Activated CD4-positive, alpha-beta memory T cell treated with anti-CD3 and anti-CD28 coated beads, Interleukin-2, amount 10 ng/mL, durations not matched to agents 7 days and 5 days (primary cell): ENCODE measurements at regions of chr20 and their contacts with region 1.

Region 1: GRCh38 chr20:35092524-35093266 is at the start of gene TRPC4AP:
- DNase-seq: peak; percentile 91
- H3K4me3 Mint-ChIP-seq: peak within 1 kb of the TSS; percentile 85
- H3K27ac Mint-ChIP-seq: peak within 1 kb of the TSS; percentile 85
- H3K4me1 Mint-ChIP-seq: peaks cover 55% of the 10 kb centered on the region
- H3K27me3 Mint-ChIP-seq: no peaks in the 10 kb centered on the region
- total RNA-seq, gene TRPC4AP: 63.5 to 65.7 TPM

Region 2: DNA sequence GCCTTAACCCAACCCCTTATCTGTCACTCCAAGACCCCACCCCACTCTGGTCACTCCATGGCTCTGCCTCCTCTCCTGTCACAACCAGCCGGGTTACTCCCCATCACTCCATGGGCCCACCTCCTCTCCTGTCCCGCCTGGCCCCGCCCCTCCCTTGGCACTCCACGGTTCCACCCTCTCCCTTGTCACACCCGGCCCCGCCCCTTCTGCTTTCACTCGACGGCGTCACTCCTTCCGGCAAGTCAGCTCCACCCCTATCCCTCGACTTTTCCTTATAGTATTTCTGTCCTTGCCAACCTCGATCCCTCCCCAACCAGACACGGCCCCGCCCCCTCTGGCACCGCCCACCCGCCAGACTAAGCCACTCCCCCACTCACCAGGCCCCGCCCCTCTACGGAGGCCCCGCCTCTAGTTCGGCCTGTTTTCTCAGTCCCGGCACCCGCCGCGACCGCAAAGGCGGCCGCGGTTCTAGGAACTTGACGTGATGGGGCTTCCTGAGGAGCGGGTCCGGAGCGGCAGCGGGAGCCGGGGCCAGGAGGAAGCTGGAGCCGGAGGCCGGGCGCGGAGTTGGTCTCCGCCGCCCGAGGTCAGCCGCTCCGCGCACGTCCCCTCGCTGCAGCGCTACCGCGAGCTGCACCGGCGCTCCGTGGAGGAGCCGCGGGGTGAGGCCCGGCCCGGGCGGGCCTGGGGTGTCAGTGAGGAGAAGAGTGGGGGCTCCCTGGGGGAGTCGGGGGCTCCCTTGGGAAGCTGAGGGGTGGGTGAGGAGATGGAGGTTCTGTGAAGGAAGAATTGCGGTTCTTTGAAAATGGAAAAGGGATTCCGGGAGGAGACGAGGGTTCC is 216.3 kb before region 1 on chr20 and contains the start of gene ACSS2:
- CTCF ChIA-PET with region 1: interaction called, 15 read pairs
- POLR2A ChIA-PET with region 1: interaction called, 13 read pairs
- DNase-seq: peak; percentile 99
- H3K4me3 Mint-ChIP-seq: peak within 1 kb of the TSS; percentile 93
- H3K27ac Mint-ChIP-seq: peak within 1 kb of the TSS; percentile 77
- H3K4me1 Mint-ChIP-seq: peaks cover 69% of the 10 kb centered on the region
- H3K27me3 Mint-ChIP-seq: peaks cover 2% of the 10 kb centered on the region
- total RNA-seq, gene ACSS2: 43.5 to 47.5 TPM

Region 3: GRCh38 chr20:34907616-34908469 is 184.9 kb before region 1 on chr20:
- CTCF ChIA-PET with region 1: no interaction called
- POLR2A ChIA-PET with region 1: no interaction called
- DNase-seq: no peak
- H3K4me3 Mint-ChIP-seq: no peak overlapping the region
- H3K27ac Mint-ChIP-seq: no peak overlapping the region
- H3K4me1 Mint-ChIP-seq: peaks cover 12% of the 10 kb centered on the region
- H3K27me3 Mint-ChIP-seq: no peaks in the 10 kb centered on the region

Region 4: DNA sequence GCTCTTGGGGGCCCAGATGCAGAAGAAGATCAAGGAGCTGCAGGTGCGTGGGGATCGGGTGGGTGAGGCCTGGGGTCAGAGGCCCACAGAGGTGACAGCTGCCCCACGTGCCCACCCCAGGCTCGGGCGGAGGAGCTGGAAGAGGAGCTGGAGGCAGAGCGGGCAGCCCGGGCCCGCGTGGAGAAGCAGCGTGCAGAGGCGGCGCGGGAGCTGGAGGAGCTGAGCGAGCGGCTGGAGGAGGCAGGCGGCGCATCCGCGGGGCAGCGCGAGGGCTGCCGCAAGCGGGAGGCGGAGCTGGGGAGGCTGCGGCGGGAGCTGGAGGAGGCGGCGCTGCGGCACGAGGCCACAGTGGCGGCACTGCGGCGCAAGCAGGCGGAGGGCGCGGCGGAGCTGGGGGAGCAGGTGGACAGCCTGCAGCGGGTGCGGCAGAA is 95.5 kb before region 1 on chr20:
- CTCF ChIA-PET with region 1: no interaction called
- POLR2A ChIA-PET with region 1: no interaction called
- DNase-seq: peak; percentile 27
- H3K4me3 Mint-ChIP-seq: no peak overlapping the region
- H3K27ac Mint-ChIP-seq: no peak overlapping the region
- H3K4me1 Mint-ChIP-seq: peaks cover 5% of the 10 kb centered on the region
- H3K27me3 Mint-ChIP-seq: no peaks in the 10 kb centered on the region

Region 5: DNA sequence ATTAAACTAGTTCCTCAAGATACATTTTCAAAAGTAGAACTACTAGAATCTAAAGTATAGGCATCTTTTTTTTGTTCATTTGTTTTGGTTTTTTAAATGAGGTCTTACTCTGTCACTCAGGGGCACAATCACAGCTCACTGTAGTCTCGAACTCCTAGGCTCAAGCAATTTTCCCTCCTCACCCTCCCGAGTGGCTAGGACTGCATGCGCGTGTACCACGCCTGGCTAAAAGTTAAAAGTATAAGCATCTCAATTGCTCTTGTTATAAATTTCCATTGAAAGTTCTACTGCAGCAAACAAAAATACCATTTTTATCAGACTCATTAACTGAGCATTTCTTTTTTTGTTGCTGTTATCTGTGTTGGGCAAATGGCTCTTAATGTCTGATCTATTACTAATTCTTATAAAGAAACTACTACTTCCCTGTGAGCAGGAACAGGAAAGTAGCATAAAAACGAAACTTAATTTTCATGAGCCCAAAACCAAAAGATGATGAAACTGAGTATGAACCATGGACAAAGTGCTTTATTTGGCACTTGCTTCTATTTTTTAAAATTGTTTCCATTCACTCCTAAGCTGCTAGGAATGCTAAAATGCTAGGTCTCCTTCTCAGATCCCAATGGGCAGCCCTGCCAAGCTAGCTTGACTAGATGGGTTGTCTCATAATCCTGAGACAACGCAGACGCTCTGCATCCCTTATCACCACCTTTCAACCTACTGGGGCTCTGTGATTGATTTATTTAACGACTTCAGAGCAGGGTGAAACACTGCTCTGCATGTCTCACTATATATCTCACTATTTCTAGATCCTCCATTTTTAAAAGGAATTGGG is 37.0 kb before region 1 on chr20:
- CTCF ChIA-PET with region 1: interaction called, 8 read pairs
- POLR2A ChIA-PET with region 1: interaction called, 17 read pairs
- DNase-seq: peak; percentile 26
- H3K4me3 Mint-ChIP-seq: peak overlapping the region; percentile 65
- H3K27ac Mint-ChIP-seq: peak overlapping the region; percentile 90
- H3K4me1 Mint-ChIP-seq: peaks cover 41% of the 10 kb centered on the region
- H3K27me3 Mint-ChIP-seq: no peaks in the 10 kb centered on the region

Region 6: GRCh38 chr20:35063168-35063567 is 29.5 kb before region 1 on chr20:
- CTCF ChIA-PET with region 1: interaction called, 10 read pairs
- POLR2A ChIA-PET with region 1: interaction called, 4 read pairs
- DNase-seq: no peak
- H3K4me3 Mint-ChIP-seq: no peak overlapping the region
- H3K27ac Mint-ChIP-seq: no peak overlapping the region
- H3K4me1 Mint-ChIP-seq: peaks cover 63% of the 10 kb centered on the region
- H3K27me3 Mint-ChIP-seq: no peaks in the 10 kb centered on the region

Region 7: GRCh38 chr20:35117196-35117595 is 24.5 kb after region 1 on chr20:
- CTCF ChIA-PET with region 1: interaction called, 12 read pairs
- POLR2A ChIA-PET with region 1: no interaction called
- DNase-seq: no peak
- H3K4me3 Mint-ChIP-seq: no peak overlapping the region
- H3K27ac Mint-ChIP-seq: no peak overlapping the region
- H3K4me1 Mint-ChIP-seq: peaks cover 12% of the 10 kb centered on the region
- H3K27me3 Mint-ChIP-seq: no peaks in the 10 kb centered on the region

Region 8: GRCh38 chr20:35179292-35180212 is 86.9 kb after region 1 on chr20:
- CTCF ChIA-PET with region 1: no interaction called
- POLR2A ChIA-PET with region 1: no interaction called
- DNase-seq: no peak
- H3K4me3 Mint-ChIP-seq: no peak overlapping the region
- H3K27ac Mint-ChIP-seq: no peak overlapping the region
- H3K4me1 Mint-ChIP-seq: no peaks in the 10 kb centered on the region
- H3K27me3 Mint-ChIP-seq: no peaks in the 10 kb centered on the region

Region 9: GRCh38 chr20:35207950-35208611 is 115.4 kb after region 1 on chr20:
- CTCF ChIA-PET with region 1: interaction called, 50 read pairs
- POLR2A ChIA-PET with region 1: no interaction called
- DNase-seq: peak; percentile 82
- H3K4me3 Mint-ChIP-seq: no peak overlapping the region
- H3K27ac Mint-ChIP-seq: no peak overlapping the region
- H3K4me1 Mint-ChIP-seq: no peaks in the 10 kb centered on the region
- H3K27me3 Mint-ChIP-seq: no peaks in the 10 kb centered on the region

Region 10: DNA sequence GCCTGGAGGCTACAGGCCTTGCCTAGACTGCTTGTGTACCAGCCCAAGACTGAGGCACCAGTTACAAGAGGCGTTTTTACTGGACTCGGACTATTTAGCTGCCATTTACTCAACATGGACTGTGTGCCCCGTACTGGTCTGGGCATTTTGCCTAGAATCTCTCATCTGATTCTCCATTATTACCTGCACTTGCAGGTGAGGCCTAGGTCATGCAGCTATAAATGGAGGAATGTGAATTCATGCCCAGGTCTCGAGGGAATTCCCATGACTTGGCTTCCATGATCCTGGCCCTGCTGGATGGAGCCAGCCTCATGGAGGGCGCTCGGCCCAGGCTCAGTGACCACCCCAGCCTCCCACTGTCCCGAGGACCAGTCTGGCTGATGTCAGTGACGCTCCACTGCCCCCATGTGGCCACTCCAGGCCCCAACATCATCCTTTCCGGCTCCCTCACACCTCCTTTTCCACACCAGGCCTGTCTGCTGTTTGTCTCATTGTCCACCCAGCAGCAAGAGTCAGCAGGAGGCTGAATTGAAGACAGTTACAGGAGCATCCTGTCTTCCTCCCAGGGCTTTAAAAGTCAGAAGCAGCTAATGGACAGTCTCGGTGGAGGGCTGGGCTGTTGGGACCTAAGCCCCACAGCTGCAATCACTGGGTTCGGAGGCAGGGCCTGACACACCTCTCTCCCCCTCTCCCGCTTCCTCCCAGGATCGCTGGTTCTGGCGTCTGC is 176.5 kb after region 1 on chr20:
- CTCF ChIA-PET with region 1: interaction called, 21 read pairs
- POLR2A ChIA-PET with region 1: no interaction called
- DNase-seq: peak; percentile 62
- H3K4me3 Mint-ChIP-seq: no peak overlapping the region
- H3K27ac Mint-ChIP-seq: no peak overlapping the region
- H3K4me1 Mint-ChIP-seq: peaks cover 4% of the 10 kb centered on the region
- H3K27me3 Mint-ChIP-seq: no peaks in the 10 kb centered on the region